Activated B cell treated with CpG ODN at 0.5 μM for 24 hours (primary cell): ENCODE measurements at regions of chr16 and their contacts with region 1.

Region 1: DNA sequence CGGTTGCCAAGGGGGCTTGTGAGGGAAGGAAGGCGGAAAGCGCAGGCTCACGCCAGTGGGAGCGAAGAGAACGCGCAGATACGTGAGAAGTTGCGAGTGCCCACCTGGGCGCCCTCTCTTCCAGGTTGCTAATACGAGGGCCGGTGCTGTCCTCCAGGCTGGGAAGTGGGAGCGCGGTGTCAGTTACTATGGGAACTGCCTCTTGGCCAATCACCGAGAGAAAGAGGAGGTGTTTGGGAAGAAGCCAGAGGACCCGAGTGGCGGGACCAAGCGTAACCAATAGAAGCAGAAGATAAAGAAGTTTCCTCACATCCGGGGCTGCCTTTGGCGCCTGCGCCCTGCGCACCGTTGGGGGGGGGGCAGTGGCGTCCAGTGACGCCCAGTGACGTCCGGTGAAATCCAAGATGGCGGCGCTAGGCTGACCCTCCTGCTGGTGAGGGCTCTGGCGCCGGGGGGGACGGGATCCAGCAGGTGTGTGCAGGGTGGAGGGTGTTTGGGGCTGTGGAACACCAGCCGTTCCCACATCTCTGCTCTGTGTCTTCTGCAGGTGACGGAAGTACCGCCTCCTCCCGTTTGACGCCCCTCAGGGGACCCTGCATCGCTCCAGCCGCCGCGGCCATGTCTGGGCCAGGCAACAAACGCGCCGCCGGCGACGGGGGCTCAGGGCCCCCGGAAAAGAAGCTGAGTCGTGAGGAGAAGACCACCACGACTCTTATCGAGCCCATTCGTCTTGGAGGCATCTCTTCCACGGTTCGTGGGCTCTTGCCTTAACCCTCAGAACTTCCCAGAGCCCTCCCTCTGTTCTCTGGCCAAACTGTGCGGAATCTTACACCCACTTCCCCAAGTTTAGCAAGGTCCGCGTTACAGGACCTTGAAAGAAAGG is at the starts of genes CFAP119 and RNF40:
- DNase-seq: peak; percentile 94
- ATAC-seq: peak; percentile 89
- H3K4me3 Mint-ChIP-seq: peak within 1 kb of the TSS; percentile 93
- H3K27ac Mint-ChIP-seq: peak within 1 kb of the TSS; percentile 87
- H3K4me1 Mint-ChIP-seq: peaks cover 42% of the 10 kb centered on the region
- H3K27me3 Mint-ChIP-seq: no peaks in the 10 kb centered on the region
- CTCF ChIP-seq: no peak
- total RNA-seq, gene CFAP119: 6.2 and 8.8 TPM in 2 replicates
- total RNA-seq, gene RNF40: 99.6 and 117 TPM in 2 replicates

Region 2: DNA sequence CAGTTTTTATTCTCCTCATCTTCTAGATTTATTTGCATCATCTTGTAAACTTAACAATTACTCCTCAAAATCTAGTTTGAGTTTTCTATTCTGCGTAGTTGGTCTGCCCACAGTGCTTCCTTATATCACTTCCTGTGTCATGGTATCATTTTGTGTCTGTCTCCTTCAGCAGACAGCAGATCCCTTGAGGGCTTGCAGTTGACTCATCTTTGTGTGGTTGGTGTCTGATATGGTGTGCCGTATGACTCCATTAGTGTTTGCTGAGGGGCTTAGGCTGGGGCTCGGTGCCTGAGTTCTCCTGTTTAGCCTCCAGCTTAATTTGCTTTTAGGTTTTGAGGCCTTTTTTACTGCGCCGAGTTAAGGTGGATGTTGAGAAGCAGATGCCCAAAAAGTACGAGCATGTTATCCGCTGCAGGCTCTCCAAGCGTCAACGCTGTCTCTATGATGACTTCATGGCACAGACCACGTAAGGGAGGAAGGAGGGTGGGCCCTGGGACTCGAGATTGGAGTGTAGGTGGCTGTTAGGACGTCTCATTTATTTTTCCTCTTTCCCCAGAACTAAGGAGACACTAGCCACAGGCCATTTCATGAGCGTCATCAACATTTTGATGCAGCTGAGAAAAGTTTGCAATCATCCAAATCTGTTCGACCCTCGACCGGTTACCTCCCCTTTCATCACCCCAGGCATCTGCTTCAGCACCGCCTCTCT is 46.3 kb before region 1 on chr16:
- CTCF ChIA-PET with region 1: no interaction called
- POLR2A ChIA-PET with region 1: interaction called, 7 read pairs
- intact Hi-C with region 1: loop called (anchors 1 kb)
- DNase-seq: no peak
- ATAC-seq: peak; percentile 99
- H3K4me3 Mint-ChIP-seq: peak overlapping the region; percentile 50
- H3K27ac Mint-ChIP-seq: peak overlapping the region; percentile 91
- H3K4me1 Mint-ChIP-seq: peaks cover 26% of the 10 kb centered on the region
- H3K27me3 Mint-ChIP-seq: no peaks in the 10 kb centered on the region
- CTCF ChIP-seq: no peak

Region 3: DNA sequence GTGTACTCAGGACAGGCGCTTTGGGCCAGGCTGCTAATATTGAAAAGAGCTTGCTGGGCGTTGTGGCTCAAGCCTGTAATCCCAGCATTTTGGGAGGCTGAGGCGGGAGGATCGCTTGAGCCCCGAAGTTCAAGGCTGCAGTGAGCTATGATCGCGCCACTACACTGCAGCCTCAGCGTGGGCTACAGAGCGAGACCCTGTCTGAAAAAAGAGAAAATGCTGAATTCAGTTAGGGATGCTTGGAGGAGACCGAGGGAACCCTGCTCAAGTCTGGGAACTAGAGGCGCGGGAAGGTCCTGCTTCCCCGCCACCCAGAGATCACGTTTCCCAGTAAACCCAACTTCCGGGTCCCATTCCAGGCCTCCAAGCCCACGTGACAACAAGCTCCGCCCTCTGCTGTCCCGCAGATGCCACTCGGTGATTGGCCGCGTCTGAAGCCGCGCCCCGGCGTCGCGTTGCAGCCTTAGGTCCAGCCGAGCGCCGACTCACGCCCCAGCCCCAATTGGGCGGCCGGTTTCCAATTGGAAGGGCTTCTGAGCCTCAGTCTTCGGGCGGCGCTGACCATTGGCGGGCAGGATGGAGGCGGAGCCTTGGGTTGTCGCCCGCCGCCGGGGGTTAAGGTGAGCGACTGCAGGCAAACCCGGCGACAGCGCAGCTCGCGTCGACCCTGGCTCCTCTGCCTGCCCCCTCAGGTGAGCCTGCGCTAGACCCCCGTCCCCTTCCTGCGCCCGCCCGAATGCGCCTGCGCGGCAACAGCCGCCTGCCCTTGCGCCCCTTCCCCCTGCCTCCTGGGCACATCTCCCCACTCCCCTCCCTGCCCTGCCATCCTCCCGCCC is 14.2 kb before region 1 on chr16 and contains the start of gene PHKG2:
- CTCF ChIA-PET with region 1: no interaction called
- POLR2A ChIA-PET with region 1: interaction called, 13 read pairs
- intact Hi-C with region 1: loop called (anchors 1 kb)
- DNase-seq: peak; percentile 90
- ATAC-seq: peak; percentile 98
- H3K4me3 Mint-ChIP-seq: peak within 1 kb of the TSS; percentile 91
- H3K27ac Mint-ChIP-seq: peak within 1 kb of the TSS; percentile 87
- H3K4me1 Mint-ChIP-seq: peaks cover 24% of the 10 kb centered on the region
- H3K27me3 Mint-ChIP-seq: no peaks in the 10 kb centered on the region
- CTCF ChIP-seq: no peak
- total RNA-seq, gene PHKG2: 45.3 and 51.4 TPM in 2 replicates

Region 4: GRCh38 chr16:30893744-30894539 is 131.8 kb after region 1 on chr16 and contains the start of gene BCL7C:
- CTCF ChIA-PET with region 1: no interaction called
- POLR2A ChIA-PET with region 1: no interaction called
- intact Hi-C with region 1: loop called (anchors 5 kb)
- DNase-seq: peak; percentile 86
- ATAC-seq: peak; percentile 76
- H3K4me3 Mint-ChIP-seq: peak within 1 kb of the TSS; percentile 84
- H3K27ac Mint-ChIP-seq: peak within 1 kb of the TSS; percentile 88
- H3K4me1 Mint-ChIP-seq: peaks cover 48% of the 10 kb centered on the region
- H3K27me3 Mint-ChIP-seq: no peaks in the 10 kb centered on the region
- CTCF ChIP-seq: no peak
- total RNA-seq, gene BCL7C: 32.2 and 35.7 TPM in 2 replicates